ENCODE measurements at regions of chr6 and their contacts with region 1.

Region 1: DNA sequence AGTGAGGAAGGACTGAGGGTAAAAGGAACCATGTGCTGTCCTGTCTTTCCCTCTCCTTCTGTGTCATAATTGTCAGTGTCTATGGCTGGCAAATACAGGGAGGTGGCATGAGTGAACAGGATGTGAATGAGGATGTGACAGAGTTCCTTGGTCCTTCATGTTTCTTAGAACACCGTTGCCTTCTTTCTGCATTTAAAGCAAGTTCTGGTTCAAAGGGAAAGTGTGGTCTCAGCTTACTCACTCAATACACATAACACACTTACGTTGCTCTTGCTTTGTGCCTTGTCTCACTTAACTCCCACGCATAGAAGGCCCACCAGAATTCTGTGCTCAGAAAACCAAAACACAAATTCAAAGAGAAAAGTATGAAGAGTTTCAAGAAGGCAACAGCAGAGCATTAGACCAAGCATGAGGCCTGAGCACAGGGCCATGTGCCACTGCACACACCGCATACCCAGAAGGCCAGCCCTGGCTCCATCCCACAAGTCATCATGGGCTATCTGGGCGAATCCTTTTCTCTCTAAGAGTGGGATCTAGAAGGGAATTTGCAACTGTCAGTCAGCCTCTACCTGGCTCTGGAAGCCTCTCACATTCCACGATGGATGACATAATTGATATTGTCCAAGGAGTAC is 38.9 kb upstream of the SAYSD1 start:
- DNase-seq: no peak
- ATAC-seq: no peak
- H3K4me3 ChIP-seq: no peak overlapping the region
- H3K27ac ChIP-seq: no peak overlapping the region
- H3K4me1 ChIP-seq: no peaks in the 10 kb centered on the region
- H3K27me3 ChIP-seq: no peaks in the 10 kb centered on the region
- CTCF ChIP-seq: no peak
- POLR2A ChIP-seq: no peak
- RAD21 ChIP-seq: no peak

Region 2: DNA sequence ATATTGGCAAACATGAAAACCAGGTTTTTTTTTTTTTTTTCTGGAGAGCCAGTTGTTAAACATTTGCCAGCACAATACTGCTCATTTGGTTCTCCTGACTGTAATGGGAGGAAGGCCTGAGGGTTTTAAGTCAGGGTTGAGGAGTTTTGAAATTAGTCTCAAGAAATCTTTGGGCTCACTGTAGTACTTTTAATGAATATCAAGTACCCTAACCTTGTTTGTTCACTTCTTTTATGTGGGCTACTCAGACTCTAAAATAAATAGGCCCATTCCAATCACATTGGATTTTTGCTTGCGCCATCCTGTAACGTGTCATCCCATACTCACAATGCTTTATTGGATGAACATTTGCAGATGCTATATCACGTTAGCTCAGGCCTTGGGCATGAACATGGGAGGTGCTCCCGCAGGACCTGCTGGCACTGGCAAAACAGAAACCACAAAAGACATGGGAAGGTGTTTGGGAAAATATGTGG is 291.9 kb before region 1 on chr6:
- CTCF ChIA-PET with region 1: no interaction called
- POLR2A ChIA-PET with region 1: no interaction called
- dilution Hi-C with region 1: no loop called
- in situ Hi-C with region 1: no loop called
- intact Hi-C with region 1: no loop called
- DNase-seq: no peak
- ATAC-seq: no peak
- H3K4me3 ChIP-seq: no peak overlapping the region
- H3K27ac ChIP-seq: no peak overlapping the region
- H3K4me1 ChIP-seq: no peaks in the 10 kb centered on the region
- H3K27me3 ChIP-seq: no peaks in the 10 kb centered on the region
- CTCF ChIP-seq: no peak
- POLR2A ChIP-seq: no peak
- RAD21 ChIP-seq: no peak

Region 3: GRCh38 chr6:38984723-38985122 is 169.2 kb before region 1 on chr6:
- CTCF ChIA-PET with region 1: no interaction called
- POLR2A ChIA-PET with region 1: no interaction called
- dilution Hi-C with region 1: no loop called
- in situ Hi-C with region 1: no loop called
- intact Hi-C with region 1: no loop called
- DNase-seq: no peak
- ATAC-seq: no peak
- H3K4me3 ChIP-seq: no peak overlapping the region
- H3K27ac ChIP-seq: no peak overlapping the region
- H3K4me1 ChIP-seq: no peaks in the 10 kb centered on the region
- H3K27me3 ChIP-seq: no peaks in the 10 kb centered on the region
- CTCF ChIP-seq: no peak
- POLR2A ChIP-seq: no peak
- RAD21 ChIP-seq: no peak

Region 4: GRCh38 chr6:39092124-39092523 is 61.8 kb before region 1 on chr6:
- CTCF ChIA-PET with region 1: no interaction called
- POLR2A ChIA-PET with region 1: no interaction called
- dilution Hi-C with region 1: no loop called
- in situ Hi-C with region 1: no loop called
- intact Hi-C with region 1: no loop called
- DNase-seq: no peak
- ATAC-seq: no peak
- H3K4me3 ChIP-seq: no peak overlapping the region
- H3K27ac ChIP-seq: no peak overlapping the region
- H3K4me1 ChIP-seq: no peaks in the 10 kb centered on the region
- H3K27me3 ChIP-seq: peaks cover 2% of the 10 kb centered on the region; the same call in 1 of the 2 replicates
- CTCF ChIP-seq: no peak
- POLR2A ChIP-seq: no peak
- RAD21 ChIP-seq: no peak

Region 5: DNA sequence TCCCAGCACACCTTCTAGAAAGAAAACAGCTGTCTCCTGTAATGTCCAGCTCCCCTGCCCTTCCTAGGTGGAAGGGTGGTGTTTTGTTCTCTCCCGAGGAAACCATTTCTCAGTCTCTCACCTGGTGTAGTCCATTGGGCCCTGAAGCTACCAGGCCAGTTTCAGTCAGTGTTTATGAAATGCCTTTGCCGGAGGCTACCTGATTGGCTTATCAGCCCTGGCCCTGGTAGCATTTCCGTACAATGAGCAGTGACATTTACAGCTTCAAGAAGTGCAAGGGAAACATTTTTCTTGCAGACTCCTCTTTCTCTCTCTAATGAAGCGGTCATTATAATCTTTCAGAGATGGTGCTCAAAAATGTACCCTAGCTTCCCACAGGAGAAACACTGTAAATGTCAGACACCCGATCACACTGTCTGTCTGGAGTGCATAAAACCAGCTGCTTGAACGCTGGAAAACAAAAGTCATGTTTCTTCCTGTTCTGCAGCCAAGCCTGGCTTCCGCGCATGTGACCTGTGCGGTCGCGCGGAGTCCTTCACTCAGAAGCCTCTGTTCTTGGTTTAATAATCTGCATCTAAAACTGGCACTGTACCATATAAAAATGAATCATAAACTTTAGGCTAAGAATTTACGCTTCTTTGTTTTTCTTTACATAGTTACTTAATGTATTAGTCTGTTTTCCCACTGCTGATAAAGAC is 10.5 kb before region 1 on chr6:
- CTCF ChIA-PET with region 1: interaction called, 5 read pairs
- POLR2A ChIA-PET with region 1: interaction called, 10 read pairs
- dilution Hi-C with region 1: no loop called
- in situ Hi-C with region 1: no loop called
- intact Hi-C with region 1: no loop called
- DNase-seq: no peak
- ATAC-seq: no peak
- H3K4me3 ChIP-seq: no peak overlapping the region
- H3K27ac ChIP-seq: no peak overlapping the region
- H3K4me1 ChIP-seq: no peaks in the 10 kb centered on the region
- H3K27me3 ChIP-seq: peaks cover 2% of the 10 kb centered on the region; the same call in 1 of the 2 replicates
- CTCF ChIP-seq: no peak
- POLR2A ChIP-seq: no peak
- RAD21 ChIP-seq: no peak

Region 6: GRCh38 chr6:39263303-39264037 is 109.6 kb after region 1 on chr6:
- CTCF ChIA-PET with region 1: no interaction called
- POLR2A ChIA-PET with region 1: no interaction called
- dilution Hi-C with region 1: no loop called
- in situ Hi-C with region 1: no loop called
- intact Hi-C with region 1: no loop called
- DNase-seq: no peak
- ATAC-seq: no peak
- H3K4me3 ChIP-seq: no peak overlapping the region
- H3K27ac ChIP-seq: no peak overlapping the region
- H3K4me1 ChIP-seq: no peaks in the 10 kb centered on the region
- H3K27me3 ChIP-seq: no peaks in the 10 kb centered on the region
- CTCF ChIP-seq: no peak
- POLR2A ChIP-seq: no peak
- RAD21 ChIP-seq: no peak